ENCODE measurements at regions of chr14 and their contacts with region 1.

Region 1: DNA sequence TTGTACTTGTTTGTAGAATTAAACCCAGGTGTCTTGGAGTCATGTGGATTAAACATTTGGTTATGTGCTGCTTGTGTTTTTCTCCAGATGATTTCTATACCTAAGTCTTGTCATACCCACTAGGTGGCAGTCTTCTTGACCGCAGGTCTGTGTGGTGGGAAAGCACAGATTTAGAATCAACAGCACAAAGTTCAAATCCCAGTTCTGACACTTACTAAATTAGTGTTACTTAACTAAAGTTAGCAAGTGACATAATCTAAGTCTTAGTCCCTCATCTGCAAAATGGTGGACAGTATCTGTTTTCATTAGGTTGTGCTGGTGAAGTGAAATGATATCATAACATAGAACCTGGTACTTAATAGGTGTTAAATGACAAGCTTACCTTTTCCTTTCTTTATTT is 151.0 kb upstream of the ARHGAP5 start:
- DNase-seq: no peak
- ATAC-seq: no peak

Region 2: DNA sequence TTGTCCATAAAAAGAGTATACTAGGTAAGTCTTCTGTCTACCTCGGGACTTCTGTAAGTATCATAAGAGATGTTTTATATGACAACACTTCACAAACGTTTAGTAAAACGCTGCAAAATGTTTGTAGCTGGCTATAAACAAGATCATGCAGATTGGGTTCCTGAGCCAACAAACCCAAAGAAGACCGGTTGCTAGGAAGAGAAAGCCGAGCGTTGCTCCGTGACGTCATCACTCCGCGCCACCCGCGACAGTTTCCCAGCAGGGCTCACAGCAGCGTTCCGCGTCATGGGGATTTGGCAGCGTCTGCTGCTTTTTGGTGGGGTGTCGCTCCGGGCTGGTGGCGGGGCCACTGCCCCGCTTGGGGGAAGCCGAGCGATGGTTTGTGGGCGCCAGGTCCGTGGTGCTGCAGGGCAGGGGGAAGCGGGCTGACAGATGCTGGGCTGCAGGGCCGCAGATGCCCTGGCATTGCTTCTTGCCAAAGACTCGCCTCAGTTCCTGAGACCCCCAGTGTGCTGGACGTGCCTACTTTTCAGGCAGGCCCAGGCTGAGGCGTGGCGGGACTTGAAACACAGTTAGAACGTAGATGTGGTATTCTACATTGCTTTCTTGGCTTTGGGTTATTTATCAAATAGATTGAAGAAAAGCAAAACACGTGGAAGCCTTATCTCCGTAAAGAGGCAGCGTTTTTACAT is 364.8 kb before region 1 on chr14 and contains the start of gene NUBPL:
- intact Hi-C with region 1: loop called (anchors 10 kb)
- DNase-seq: peak; percentile 98
- ATAC-seq: peak; percentile 99
- total RNA-seq, gene NUBPL: 28.2 TPM

Region 3: GRCh38 chr14:31712244-31713127 is 213.6 kb before region 1 on chr14:
- intact Hi-C with region 1: no loop called
- DNase-seq: no peak
- ATAC-seq: no peak

Region 4: DNA sequence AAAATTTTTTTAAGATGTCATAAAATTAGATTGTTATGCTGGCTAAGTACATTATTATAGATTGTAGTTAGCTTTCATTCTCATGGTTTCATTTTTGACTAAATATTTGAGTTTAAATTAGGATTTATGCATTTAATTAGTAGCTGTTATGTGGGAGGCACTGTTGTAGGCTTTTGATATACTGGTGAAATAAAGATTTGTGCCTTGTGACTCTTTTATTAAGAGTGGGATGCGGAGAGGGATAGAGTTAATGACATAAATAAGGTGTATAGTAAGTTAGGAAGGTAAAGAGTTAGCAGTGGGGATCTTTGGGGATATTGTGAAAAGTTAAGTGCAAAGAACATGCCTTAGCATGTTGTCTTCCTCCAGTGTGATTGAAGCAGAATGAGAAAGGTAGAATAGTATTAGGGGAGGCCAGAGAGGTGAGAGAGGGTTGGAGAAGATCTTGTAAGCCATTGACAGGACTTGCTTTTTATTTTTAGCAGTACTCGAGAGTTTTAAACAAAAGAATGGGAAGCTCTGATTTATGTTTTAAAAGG is 159.8 kb after region 1 on chr14:
- intact Hi-C with region 1: no loop called
- DNase-seq: no peak
- ATAC-seq: no peak

Measured in Right ventricle myocardium superior (tissue), 1 donor.